AG04449 (cell line): ENCODE measurements at regions of chr19 and their contacts with region 1.

Region 1: GRCh38 chr19:11924886-11925650 is at the start of gene ZNF700:
- DNase-seq: no peak
- H3K4me3 ChIP-seq: peak within 1 kb of the TSS; percentile 95
- CTCF ChIP-seq: no peak

Region 2: DNA sequence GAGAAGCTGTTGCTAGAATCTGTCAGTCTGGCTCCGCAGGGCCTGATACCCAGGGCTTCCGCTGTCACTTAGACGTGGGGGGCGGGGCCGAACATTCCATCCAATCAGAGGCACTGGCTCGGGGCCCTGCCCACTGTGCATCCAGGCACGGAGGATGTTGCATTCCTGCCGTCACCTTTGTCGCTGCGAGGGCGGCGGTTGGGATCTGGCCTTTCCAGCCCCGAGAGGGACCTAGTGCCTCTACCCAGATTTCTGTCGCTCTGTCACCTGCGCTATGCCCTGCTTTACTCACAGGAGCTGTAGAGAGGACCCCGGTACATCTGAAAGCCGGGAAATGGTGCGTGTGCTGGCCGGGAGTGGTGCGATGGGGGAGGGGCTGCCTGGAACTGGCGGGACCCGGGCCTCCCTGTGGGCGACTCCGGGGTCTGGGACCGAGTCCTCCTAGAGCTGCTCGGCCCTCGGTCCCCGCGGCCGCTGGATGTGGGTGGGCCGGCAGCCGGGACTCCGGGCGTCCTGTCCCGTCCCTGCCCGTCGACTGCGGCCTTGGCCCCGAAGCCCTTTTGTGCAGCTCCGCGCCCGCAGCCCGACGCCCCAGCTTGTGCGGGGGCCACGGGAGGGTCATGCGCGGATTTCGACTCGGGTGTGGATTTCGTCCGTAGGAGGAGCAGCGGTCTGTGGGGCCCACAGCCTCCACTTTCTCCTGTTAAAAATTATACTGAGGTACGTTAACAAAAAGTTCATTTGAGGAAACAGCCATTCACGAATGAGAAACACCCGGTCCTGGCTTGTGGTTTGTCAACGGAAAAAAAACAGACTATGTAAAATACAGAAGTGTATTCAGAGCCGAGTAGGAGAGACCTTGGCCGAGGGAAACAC is 76.2 kb before region 1 on chr19 and contains the start of gene ZNF439:
- CTCF ChIA-PET with region 1: no interaction called
- POLR2A ChIA-PET with region 1: no interaction called
- DNase-seq: peak; percentile 7
- H3K4me3 ChIP-seq: peak within 1 kb of the TSS; percentile 78
- CTCF ChIP-seq: no peak

Region 3: DNA sequence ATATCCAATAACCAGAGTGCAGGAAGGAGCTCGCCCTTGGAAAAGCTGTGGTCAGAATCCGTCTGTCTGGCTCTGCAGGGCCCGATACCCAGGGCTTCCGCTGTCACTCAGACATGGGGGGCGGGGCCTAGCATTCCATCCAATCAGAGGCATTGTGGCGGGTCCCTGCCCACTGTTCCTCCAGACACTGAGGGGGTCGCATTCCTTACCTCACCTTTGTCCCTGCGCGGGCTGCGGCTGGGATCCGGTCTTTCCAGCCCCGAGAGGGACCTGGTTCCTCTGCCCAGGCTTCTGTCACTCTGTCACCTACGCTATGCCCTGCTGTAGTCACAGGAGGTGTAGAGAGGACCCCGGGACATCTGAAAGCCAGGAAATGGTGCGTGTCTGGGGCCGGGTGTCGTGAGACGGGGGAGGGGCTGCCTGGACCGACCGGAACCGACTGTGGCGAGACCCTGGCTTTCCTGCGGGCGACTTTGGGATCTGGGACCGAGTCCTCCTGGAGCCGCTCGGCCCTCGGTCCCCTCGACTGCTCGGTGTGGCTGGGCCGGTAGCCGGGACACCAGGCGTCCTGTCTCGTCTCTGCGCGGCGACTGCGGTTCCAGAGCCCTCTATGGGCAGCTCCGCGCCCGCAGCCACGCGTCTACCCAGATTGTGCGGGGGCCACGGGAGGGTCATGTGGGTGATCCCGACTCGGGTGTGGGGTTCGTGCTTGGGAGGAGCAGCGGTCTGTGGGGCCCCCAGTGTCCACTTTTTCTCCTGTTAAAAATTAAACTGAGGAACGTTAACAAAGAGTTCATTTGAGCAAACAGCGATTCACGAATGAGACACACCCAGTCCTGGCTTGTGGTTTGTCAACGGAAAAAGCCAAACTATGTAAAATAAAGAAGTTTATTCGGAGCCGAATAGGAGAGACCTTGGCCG is 37.2 kb before region 1 on chr19 and contains the start of gene ZNF69:
- CTCF ChIA-PET with region 1: interaction called, 13 read pairs
- POLR2A ChIA-PET with region 1: no interaction called
- DNase-seq: no peak
- H3K4me3 ChIP-seq: peak within 1 kb of the TSS; percentile 86
- CTCF ChIP-seq: peak; percentile 38

Region 4: DNA sequence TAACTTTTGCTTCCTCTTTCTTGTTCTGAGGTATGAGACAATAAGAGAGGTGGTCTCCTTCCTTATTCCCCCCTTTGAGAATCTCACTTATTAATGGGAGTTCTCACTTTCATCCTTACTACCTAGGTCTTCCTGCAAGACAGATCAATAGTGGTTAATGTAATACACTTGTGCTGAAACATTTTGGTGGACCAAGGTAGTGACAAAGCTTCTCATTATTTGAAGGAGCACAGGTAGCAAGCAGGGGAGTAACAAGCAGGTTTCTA is 17.7 kb after region 1 on chr19:
- CTCF ChIA-PET with region 1: interaction called, 31 read pairs
- POLR2A ChIA-PET with region 1: no interaction called
- DNase-seq: no peak
- H3K4me3 ChIP-seq: no peak overlapping the region
- CTCF ChIP-seq: no peak

Region 5: DNA sequence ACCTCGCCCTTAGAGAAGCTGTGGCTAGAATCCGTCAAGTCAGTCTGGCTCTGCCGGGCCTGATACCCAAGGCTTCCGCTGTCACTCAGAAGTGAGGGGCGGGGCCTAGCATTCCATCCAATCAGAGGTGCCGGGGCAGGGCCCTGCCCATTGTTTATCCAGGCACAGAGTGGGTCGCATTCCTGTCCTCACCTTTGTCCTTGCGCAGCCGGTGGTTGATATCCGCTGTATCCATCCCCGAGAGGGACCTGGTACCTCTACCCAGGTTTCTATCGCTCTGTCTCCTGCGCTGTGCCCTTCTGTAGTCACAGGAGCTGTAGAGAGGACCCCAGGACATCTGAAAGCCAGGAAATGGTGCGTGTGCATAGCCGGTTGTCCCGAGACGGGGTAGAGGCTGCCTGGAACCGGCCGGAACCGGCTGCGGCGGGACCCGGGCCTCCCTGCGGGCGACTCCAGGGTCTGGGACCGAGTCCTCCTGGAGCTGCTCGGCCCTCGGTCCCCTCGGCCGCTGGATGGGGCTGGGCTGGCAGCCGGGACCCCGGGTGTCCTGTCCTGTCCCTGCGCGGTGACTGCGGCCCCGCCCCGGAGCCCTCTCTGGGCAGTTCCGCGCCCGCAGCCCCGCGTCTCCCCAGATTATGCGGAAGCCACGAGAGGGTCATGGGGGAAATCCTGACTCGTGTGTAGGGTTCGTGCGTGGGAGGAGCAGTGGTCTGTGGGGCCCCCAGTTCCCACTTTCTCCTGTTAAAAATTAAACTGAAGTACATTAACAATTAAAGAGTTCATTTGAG is 40.0 kb after region 1 on chr19 and contains the start of gene ZNF763:
- CTCF ChIA-PET with region 1: interaction called, 30 read pairs
- POLR2A ChIA-PET with region 1: no interaction called
- DNase-seq: no peak
- H3K4me3 ChIP-seq: peak within 1 kb of the TSS; percentile 80
- CTCF ChIP-seq: no peak

Region 6: DNA sequence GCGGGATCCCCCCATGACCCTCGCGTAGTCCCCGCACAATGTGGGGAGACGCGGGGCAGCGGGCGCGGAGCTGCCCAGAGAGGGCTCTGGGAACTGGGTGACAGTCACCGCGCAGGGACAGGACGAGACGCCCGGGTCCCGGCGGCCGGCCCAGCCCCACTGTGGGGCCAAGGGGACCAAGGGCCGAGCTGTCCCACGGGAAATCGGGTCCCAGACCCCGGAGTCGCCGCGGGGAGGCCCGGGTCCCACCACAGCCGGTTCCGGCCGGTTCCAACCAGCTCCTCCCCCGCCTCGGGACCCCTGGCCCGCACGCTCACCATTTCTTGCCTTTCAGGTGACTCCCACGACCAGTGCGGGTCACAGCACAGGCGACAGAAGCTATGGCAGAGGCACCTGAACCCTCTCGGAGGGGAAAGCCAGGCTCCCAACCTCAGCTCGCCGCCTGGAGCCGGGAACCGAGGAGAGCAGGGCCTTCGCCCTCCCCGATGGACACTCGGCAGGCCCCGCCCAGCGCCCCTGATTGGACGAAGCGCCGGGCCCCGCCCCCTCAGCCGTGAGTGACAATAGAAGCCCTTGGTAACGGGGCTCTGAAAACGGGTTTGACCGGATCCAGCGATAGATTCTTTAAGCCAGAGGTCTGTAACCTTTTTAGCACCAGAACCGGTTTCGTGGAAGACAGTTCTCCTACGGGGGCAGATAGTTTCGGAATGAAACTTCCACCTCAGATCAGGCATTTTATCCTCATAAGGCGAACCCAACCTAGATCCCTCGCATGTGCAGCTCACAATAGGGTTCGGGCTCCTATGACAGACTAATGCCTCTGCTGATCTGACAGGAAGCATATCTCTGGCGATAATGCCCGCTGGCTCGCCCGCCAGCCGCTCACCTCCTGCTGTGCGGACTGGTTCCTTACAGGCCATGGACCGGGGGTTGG is 110.4 kb after region 1 on chr19 and contains the start of gene ZNF433:
- CTCF ChIA-PET with region 1: interaction called, 12 read pairs
- POLR2A ChIA-PET with region 1: interaction called, 5 read pairs
- DNase-seq: peak; percentile 19
- H3K4me3 ChIP-seq: peak within 1 kb of the TSS; percentile 96
- CTCF ChIP-seq: no peak